ENCODE measurements at regions of chr17 and their contacts with region 1.

Region 1: DNA sequence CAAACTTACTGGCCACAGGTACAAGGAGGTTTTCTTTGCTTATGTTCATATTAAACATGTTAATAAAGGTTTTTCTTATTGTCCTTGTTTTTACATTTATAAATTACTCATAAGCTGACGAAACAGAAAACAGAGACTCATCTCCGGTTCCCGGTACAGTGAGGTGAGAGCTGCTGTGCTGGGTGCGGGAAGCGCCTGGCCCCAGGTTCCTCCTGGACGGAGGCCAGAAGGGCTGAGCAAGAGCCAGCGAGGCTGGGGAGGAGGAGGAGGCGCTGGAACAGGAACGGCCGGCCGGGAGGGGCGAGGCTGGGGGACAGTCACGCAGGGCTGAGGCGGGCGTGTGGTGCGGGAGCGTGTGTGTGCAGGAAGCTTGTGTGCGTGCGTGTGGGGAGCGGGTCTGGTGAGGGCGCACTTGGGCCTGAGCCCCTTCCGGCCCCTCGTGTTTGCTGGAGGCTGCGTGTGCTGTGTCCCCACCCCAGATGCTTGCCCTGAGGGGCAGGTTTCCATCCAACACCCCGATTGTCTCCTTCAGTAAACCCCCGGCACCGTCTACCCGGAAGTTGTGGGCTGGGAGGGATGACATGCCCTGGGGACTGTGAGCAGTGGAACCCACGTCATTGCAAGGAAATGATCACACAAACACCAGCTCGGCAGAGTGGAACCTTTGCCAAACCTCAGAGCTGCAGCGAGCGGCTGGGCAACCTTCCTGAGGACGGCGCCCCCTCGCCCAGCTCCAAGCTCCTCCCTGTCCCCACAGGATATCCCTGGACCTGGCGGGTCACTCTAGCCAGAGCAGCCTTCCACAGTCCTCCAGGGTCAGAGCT is 19.5 kb downstream of the CD7 start:
- DNase-seq: peak; percentile 95
- H3K4me3 Mint-ChIP-seq: peak overlapping the region; percentile 90
- H3K27ac Mint-ChIP-seq: peak overlapping the region; percentile 100
- H3K4me1 Mint-ChIP-seq: peaks cover 85% of the 10 kb centered on the region
- H3K27me3 Mint-ChIP-seq: no peaks in the 10 kb centered on the region

Region 2: GRCh38 chr17:82283208-82283749 is 14.6 kb before region 1 on chr17:
- CTCF ChIA-PET with region 1: interaction called, 11 read pairs
- POLR2A ChIA-PET with region 1: no interaction called
- DNase-seq: no peak
- H3K4me3 Mint-ChIP-seq: no peak overlapping the region
- H3K27ac Mint-ChIP-seq: no peak overlapping the region
- H3K4me1 Mint-ChIP-seq: peaks cover 27% of the 10 kb centered on the region
- H3K27me3 Mint-ChIP-seq: no peaks in the 10 kb centered on the region

Region 3: DNA sequence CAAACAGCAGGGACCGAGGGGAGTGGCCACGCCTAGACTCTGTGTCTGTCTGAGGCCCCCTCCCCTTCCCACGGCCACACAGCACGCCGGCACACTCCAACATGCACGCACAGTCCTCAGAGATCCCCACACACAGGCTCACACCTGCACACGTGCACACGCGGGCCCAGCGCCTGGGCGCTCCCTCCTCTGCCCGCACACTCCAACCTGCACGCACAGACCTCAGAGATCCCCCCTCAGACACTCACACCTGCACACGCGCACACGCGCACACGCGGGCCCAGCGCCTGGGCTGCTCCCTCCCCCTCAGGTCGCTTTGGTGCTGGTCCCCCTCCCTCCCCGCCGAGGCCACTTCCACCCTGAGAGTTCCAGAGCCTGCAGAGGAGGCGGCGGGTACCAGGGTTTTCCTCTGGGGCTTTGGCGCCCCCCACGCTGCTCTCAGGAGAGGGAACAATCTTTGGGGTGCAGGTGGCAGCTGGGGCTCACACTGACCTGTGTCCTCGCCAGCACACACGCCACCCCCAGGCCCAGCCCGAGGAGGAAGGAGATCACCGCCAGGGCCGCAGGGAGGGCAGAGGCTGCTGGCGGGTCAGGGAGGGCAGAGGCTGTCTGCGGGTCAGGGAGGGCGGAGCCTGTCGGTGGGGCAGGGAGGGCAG is 17.9 kb after region 1 on chr17:
- CTCF ChIA-PET with region 1: interaction called, 58 read pairs
- POLR2A ChIA-PET with region 1: interaction called, 4 read pairs
- DNase-seq: peak; percentile 42
- H3K4me3 Mint-ChIP-seq: no peak overlapping the region
- H3K27ac Mint-ChIP-seq: peak overlapping the region; percentile 87
- H3K4me1 Mint-ChIP-seq: peaks cover 18% of the 10 kb centered on the region
- H3K27me3 Mint-ChIP-seq: no peaks in the 10 kb centered on the region

Region 4: DNA sequence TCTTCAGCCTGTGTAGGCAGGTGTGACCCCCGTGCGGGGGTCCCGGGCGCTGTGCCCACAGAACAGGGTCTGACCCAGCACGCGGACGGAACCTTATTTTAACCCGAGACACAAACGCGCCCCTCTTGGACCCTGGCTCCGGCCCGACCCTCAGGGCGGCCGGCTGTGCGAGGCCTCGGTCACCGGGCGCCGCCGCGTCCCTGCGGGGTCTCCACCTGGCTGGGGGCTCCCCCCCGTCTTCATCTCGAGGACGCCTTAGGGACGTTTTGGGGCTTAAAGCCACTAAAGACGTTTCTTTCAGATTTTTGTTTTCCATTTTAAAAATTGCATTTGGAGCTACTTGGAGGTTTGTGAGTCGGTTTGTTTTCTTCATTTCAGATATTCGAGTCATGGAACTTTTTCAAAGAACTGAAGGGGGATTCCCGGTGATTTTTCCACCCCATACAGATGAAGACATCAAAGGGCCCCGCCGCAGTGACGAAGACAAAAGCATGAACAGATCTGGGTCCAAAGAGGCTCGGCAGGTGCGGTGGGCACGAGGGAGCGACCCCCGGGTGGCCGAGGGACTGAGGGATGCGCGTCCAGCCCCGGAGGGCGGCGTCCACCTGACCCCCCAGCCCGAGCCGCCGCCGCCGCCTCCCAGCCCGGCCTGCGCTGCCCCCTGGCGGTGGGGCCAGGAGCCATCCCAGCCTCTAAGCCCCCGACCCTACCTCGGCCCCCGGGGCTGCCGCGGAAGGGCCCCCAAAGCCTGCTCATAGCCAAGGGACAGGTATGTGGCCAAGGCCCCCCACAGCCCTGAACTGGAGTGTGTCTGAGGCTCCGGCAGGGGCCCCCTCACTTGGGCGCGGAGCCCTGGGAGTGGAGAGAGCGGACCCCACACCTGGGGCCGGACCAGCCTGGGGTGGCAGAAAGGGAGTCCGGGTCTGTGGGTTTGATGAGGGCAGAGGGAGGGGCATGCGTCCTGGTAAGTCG is 23.3 kb after region 1 on chr17:
- CTCF ChIA-PET with region 1: interaction called, 58 read pairs
- POLR2A ChIA-PET with region 1: interaction called, 4 read pairs
- DNase-seq: peak; percentile 76
- H3K4me3 Mint-ChIP-seq: peak overlapping the region; percentile 69
- H3K27ac Mint-ChIP-seq: peak overlapping the region; percentile 80
- H3K4me1 Mint-ChIP-seq: peaks cover 22% of the 10 kb centered on the region
- H3K27me3 Mint-ChIP-seq: no peaks in the 10 kb centered on the region

Region 5: DNA sequence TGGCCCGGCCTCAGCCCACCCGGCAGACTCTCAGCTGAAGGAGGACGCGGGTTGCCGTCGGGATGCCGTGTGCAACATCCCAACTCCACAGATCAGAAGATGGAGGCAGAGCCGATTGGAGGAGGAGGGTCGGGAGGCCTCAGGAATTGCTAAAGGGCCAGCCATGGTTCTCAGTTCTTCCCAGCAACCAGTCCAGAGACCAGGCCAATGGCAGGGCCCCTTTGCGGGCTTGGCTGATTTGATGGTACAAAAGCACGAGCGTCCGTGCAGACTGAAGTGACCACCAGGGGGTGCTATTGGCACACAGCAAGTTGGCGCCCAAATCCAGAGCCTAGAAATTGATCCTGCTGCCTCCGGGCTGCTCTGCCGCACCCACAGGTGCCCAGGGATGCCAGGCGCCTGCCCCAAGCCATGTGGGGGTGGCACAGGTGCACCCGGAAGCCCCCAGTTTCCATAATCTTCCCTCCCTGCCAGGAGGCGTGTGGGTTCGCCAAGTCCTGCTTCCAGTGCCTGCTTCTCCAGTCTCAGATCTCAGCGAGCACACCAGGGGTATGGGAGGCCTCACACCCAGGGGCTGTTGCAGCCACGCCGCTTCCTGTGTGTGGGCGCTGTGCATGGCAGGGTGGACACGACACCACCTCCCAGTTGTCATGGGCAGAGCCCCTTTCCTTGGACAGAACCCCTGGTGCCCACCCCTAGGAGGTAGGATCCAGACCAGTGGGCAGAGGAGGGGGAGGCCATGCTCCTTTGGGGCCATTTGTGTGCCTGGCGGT is 54.0 kb after region 1 on chr17:
- CTCF ChIA-PET with region 1: interaction called, 13 read pairs
- POLR2A ChIA-PET with region 1: no interaction called
- DNase-seq: peak; percentile 89
- H3K4me3 Mint-ChIP-seq: no peak overlapping the region
- H3K27ac Mint-ChIP-seq: no peak overlapping the region
- H3K4me1 Mint-ChIP-seq: peaks cover under 1% of the 10 kb centered on the region
- H3K27me3 Mint-ChIP-seq: peaks cover 7% of the 10 kb centered on the region